ENCODE measurements at regions of chr14 and their contacts with region 1.

Region 1: DNA sequence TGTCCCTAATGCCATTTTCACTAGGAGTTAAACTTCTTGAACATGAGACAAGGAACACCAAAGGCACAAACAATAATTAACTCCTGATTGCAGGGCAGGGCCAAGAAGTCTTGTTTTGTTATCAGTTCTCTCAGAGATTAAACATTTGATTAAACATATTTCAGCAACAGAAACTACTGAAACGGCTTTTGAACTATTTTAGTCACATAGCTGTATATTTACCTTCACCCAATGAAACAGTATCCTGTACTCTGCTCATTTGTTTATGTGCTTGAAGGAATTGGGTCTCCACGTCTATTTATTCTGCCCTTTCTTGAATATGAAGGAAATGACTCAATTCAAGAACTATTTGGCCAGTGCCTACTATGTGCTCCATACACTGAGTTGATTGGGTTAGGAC is 51.3 kb upstream of the PTCSC3 start:
- DNase-seq: peak; percentile 86
- ATAC-seq: peak; percentile 98
- H3K4me3 ChIP-seq: no peak overlapping the region
- H3K27ac ChIP-seq: peak overlapping the region; percentile 51
- H3K4me1 ChIP-seq: peaks cover 23% of the 10 kb centered on the region
- H3K27me3 ChIP-seq: no peaks in the 10 kb centered on the region
- CTCF ChIP-seq: no peak

Region 2: DNA sequence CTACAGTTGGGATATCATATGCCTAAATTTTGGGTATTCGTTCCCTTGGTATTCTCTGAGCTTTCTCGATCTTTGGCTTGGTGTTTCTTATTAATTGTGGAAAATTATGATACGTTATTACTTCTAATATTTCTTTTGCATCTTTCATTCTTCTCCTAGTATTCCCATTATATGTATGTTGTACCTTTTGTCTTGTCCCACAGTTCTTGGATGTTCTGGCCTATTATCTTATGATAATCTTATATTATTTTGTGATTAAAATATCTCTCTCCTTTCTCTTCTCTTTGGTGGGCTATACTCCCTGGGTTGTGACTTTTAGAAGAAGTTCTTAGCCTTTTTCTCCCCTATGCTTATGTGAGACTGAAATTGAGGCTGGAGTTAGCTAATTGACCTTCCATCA is 76.5 kb before region 1 on chr14:
- CTCF ChIA-PET with region 1: no interaction called
- POLR2A ChIA-PET with region 1: no interaction called
- intact Hi-C with region 1: no loop called
- DNase-seq: no peak
- ATAC-seq: no peak
- H3K4me3 ChIP-seq: no peak overlapping the region
- H3K27ac ChIP-seq: no peak overlapping the region
- H3K4me1 ChIP-seq: no peaks in the 10 kb centered on the region
- H3K27me3 ChIP-seq: peaks cover 4% of the 10 kb centered on the region; the same call in 1 of the 2 replicates
- CTCF ChIP-seq: no peak

Region 3: GRCh38 chr14:36161776-36162175 is 66.0 kb before region 1 on chr14:
- CTCF ChIA-PET with region 1: no interaction called
- POLR2A ChIA-PET with region 1: interaction called, 15 read pairs
- intact Hi-C with region 1: no loop called
- DNase-seq: no peak
- ATAC-seq: no peak
- H3K4me3 ChIP-seq: no peak overlapping the region
- H3K27ac ChIP-seq: no peak overlapping the region
- H3K4me1 ChIP-seq: no peaks in the 10 kb centered on the region
- H3K27me3 ChIP-seq: peaks cover 60% of the 10 kb centered on the region
- CTCF ChIP-seq: no peak

Region 4: DNA sequence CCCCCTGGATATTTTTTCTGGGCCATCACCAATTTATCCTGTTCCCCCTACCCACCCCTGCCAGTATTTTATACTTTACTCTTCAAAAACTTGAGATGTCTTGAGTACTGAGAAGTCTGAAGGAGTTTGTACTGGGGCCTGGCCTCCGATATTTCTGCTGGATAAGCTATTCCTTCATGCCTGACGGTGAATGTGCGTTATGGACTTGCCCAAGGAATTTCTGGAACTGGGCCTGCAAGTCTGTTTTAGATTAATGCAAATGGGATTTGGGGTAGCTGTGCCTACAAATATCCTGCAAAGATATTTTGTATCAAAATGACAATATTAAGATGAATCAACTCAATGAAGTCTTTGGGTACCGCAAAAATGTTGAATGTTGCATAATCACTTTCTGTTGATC is 51.3 kb before region 1 on chr14 and contains the start of gene PTCSC3:
- CTCF ChIA-PET with region 1: no interaction called
- POLR2A ChIA-PET with region 1: interaction called, 10 read pairs
- intact Hi-C with region 1: no loop called
- DNase-seq: no peak
- ATAC-seq: no peak
- H3K4me3 ChIP-seq: no peak within 1 kb of the TSS
- H3K27ac ChIP-seq: no peak within 1 kb of the TSS
- H3K4me1 ChIP-seq: no peaks in the 10 kb centered on the region
- H3K27me3 ChIP-seq: peaks cover 86% of the 10 kb centered on the region
- CTCF ChIP-seq: no peak
- total RNA-seq, gene PTCSC3: not detected in 2 replicates